H1 (cell line): ENCODE measurements at regions of chr10 and their contacts with region 1.

Region 1: GRCh38 chr10:72273410-72274212 is at the start of gene DDIT4:
- DNase-seq: peak; percentile 98
- H3K4me3 ChIP-seq: peak within 1 kb of the TSS; percentile 88 to 94 (median 93)
- H3K27ac ChIP-seq: peak within 1 kb of the TSS; percentile 85
- H3K4me1 ChIP-seq: peaks cover 0 to 19% (median 15%) of the 10 kb centered on the region in 4 experiments; a peak in 6 of 7 replicates
- H3K27me3 ChIP-seq: no peaks in the 10 kb centered on the region
- CTCF ChIP-seq: no peak
- EP300 ChIP-seq: 0 out of 3 replicates have a peak, but pooled peaks of 1 of the 2 experiments have one; percentile 42
- POLR2A ChIP-seq: peak; percentile 100
- RAD21 ChIP-seq: no peak
- total RNA-seq, gene DDIT4: 42.1 and 47.4 TPM in 2 replicates

Region 2: GRCh38 chr10:72126184-72126871 is 147.3 kb before region 1 on chr10:
- CTCF ChIA-PET with region 1: interaction called, 12 read pairs
- POLR2A ChIA-PET with region 1: interaction called, 10 read pairs
- DNase-seq: no peak
- H3K4me3 ChIP-seq: no peak overlapping the region; a peak in 1 of 8 replicates
- H3K27ac ChIP-seq: no peak overlapping the region; the same call in 1 of the 2 replicates
- H3K4me1 ChIP-seq: peaks cover 0 to 5% (median 2%) of the 10 kb centered on the region in 4 experiments; a peak in 2 of 7 replicates
- H3K27me3 ChIP-seq: no peaks in the 10 kb centered on the region
- CTCF ChIP-seq: peak in 2 of 3 experiments; percentile 45 to 47; a peak in 2 of 4 replicates
- EP300 ChIP-seq: no peak
- POLR2A ChIP-seq: no peak
- RAD21 ChIP-seq: peak; percentile 59 to 66

Region 3: DNA sequence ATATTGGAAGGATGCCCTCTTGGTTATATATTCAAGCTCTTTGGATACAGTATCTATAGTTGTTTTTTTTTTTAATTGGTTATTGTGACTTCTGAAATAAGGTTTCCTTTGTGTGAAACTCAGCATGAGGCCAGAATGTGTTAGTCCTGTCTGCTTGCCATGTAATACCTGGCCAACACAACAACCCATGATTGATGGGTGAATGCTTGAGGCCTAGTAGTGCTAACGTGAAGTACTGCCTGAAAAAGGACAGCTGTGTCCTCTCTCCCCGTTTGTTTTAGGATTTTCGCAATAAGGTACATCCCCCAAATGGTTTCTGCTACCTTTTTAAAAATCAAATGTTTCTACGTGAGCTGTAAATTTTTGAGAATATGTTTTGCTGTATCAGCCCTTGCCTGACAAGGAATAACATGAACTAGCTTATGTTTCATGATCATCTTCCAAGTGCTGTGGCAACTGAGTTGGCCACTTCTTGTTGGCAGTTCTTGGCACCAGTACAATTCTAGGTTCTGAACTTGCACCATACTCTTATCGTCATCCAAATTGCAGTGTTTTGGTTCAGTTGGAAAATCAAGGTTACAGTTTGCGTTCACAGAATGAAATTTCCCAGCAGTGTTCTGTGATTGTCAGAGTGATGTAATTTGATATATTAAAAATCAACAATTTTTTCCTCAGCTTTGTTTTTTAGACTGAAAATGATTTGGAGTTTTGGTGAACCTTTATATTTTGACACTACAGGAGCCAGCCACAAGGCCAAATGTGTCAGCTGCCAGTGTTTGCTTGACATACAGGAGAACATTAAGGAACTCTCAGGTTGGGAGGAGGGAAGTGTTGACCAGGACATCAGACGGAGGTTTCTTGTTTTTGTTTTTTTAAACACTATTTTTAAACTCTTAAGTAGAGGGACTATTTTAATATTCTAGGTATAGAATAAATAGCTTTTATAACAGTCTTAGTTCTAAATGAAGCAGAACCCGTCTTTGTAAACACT is 44.1 kb before region 1 on chr10:
- CTCF ChIA-PET with region 1: interaction called, 18 read pairs
- POLR2A ChIA-PET with region 1: interaction called, 25 read pairs
- DNase-seq: no peak
- H3K4me3 ChIP-seq: no peak overlapping the region
- H3K27ac ChIP-seq: no peak overlapping the region
- H3K4me1 ChIP-seq: peaks cover 0 to 6% (median 3%) of the 10 kb centered on the region in 4 experiments; a peak in 4 of 7 replicates
- H3K27me3 ChIP-seq: no peaks in the 10 kb centered on the region
- CTCF ChIP-seq: no peak
- EP300 ChIP-seq: no peak
- POLR2A ChIP-seq: no peak
- RAD21 ChIP-seq: no peak

Region 4: DNA sequence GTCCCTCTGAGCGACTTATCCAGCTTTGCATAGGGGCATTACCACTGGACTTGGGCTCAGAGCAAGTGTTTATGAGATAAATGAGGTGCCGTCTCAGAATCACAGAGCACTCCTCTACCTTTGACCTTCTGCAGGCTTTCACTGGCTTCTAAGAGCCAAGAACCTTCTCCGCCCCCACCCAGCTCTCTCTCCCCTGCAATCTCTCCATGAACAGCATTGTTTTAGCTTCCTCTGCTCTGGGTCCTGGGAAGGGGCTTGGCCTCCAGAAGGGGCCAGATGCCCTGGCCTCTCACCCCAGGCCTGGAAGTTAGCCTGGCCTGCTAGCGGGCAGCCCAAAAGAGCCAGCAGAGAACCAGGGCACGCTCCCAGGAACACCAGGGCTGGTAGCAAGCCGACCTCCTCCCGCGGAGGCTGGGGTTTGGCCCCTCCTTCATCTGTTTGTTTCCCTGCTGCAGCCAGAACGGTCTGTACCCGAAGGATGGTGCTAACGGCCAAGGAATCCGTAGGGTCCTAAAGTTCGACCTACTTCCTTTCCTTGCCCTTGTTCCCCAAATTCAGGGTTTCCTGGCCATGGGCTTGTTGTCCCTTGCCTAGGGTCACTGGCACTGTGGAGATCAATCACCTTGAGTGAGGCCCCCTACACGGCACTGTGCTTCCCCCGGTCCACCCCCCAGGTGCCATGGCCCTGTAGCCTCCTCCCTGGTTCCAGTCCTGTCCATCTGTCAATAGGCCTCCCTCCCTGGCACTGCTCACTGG is 18.6 kb before region 1 on chr10:
- CTCF ChIA-PET with region 1: interaction called, 39 read pairs
- POLR2A ChIA-PET with region 1: interaction called, 673 read pairs
- DNase-seq: peak in 1 of 2 experiments; percentile 80
- H3K4me3 ChIP-seq: peak overlapping the region in 1 of 4 experiments; percentile 17; a peak in 1 of 8 replicates
- H3K27ac ChIP-seq: peak overlapping the region; percentile 42; the same call in 1 of the 2 replicates
- H3K4me1 ChIP-seq: peaks cover 5 to 16% (median 13%) of the 10 kb centered on the region in 4 experiments
- H3K27me3 ChIP-seq: no peaks in the 10 kb centered on the region
- CTCF ChIP-seq: no peak
- EP300 ChIP-seq: no peak
- POLR2A ChIP-seq: 0 out of 3 replicates have a peak, but pooled peaks of 1 of the 2 experiments have one; percentile 45
- RAD21 ChIP-seq: peak; percentile 31 to 36; a peak in 3 of 4 replicates

Region 5: GRCh38 chr10:72292223-72292691 is 18.6 kb after region 1 on chr10:
- CTCF ChIA-PET with region 1: interaction called, 30 read pairs
- POLR2A ChIA-PET with region 1: interaction called, 205 read pairs
- DNase-seq: no peak
- H3K4me3 ChIP-seq: no peak overlapping the region
- H3K27ac ChIP-seq: no peak overlapping the region
- H3K4me1 ChIP-seq: peaks cover 4 to 11% (median 7%) of the 10 kb centered on the region in 4 experiments
- H3K27me3 ChIP-seq: no peaks in the 10 kb centered on the region; a peak in 1 of 7 replicates
- CTCF ChIP-seq: no peak
- EP300 ChIP-seq: no peak
- POLR2A ChIP-seq: no peak
- RAD21 ChIP-seq: no peak

Region 6: GRCh38 chr10:72331601-72332422 is 58.2 kb after region 1 on chr10:
- CTCF ChIA-PET with region 1: interaction called, 91 read pairs
- POLR2A ChIA-PET with region 1: interaction called, 895 read pairs
- DNase-seq: peak; percentile 76 to 88
- H3K4me3 ChIP-seq: peak overlapping the region in 1 of 4 experiments; percentile 39; a peak in 2 of 8 replicates
- H3K27ac ChIP-seq: no peak overlapping the region; the same call in 1 of the 2 replicates
- H3K4me1 ChIP-seq: peaks cover 0 to 36% (median 23%) of the 10 kb centered on the region in 4 experiments; a peak in 6 of 7 replicates
- H3K27me3 ChIP-seq: no peaks in the 10 kb centered on the region
- CTCF ChIP-seq: peak in 2 of 3 experiments; percentile 18 to 57; a peak in 3 of 4 replicates
- EP300 ChIP-seq: no peak
- POLR2A ChIP-seq: no peak; a peak in 1 of 3 replicates
- RAD21 ChIP-seq: peak in 1 of 2 experiments; percentile 25; a peak in 2 of 4 replicates